ENCODE measurements at regions of chr14 and their contacts with region 1.

Region 1: DNA sequence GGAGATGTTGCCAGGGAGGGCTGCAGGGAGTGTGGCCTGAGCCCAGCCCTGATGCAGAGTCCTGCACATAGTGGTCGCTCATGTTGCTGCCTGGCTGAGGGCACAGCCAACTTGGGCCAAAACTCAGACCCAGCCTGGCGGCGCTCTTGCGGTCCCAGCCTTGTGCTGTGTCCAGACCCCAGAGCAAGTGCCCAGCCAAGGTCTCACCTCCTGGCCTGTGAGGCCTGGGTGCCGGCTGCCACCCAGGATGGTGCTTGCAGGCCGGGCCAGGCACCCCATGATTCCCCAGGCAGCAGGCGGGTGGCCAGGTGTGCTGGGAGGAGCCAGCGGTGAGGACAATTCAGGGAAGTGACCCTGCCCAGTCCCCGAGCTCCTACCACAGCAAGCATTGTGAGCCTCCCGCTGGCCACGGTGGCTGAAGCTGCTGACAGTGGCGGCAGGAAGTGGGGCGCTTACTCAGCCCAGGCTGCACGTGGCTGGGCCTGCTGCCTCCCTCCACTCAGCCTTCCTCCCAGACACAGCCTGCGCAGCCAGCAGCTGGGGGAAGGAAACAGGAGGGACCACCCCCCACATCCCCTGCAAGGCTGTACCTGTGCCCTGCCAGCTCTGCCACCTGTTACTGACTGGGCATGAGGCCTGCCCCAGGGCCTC is 17.7 kb upstream of the PGF start:
- DNase-seq: no peak
- H3K4me3 ChIP-seq: no peak overlapping the region
- H3K27ac ChIP-seq: no peak overlapping the region
- H3K4me1 ChIP-seq: peaks cover 5 to 14% (median 9%) of the 10 kb centered on the region in 4 experiments; a peak in 6 of 7 replicates
- H3K27me3 ChIP-seq: 0 out of 7 replicates have a peak, but pooled peaks cover 0 to 2% (median 0%) of the 10 kb centered on the region in 4 experiments
- CTCF ChIP-seq: no peak
- EP300 ChIP-seq: no peak
- POLR2A ChIP-seq: no peak
- RAD21 ChIP-seq: no peak

Region 2: DNA sequence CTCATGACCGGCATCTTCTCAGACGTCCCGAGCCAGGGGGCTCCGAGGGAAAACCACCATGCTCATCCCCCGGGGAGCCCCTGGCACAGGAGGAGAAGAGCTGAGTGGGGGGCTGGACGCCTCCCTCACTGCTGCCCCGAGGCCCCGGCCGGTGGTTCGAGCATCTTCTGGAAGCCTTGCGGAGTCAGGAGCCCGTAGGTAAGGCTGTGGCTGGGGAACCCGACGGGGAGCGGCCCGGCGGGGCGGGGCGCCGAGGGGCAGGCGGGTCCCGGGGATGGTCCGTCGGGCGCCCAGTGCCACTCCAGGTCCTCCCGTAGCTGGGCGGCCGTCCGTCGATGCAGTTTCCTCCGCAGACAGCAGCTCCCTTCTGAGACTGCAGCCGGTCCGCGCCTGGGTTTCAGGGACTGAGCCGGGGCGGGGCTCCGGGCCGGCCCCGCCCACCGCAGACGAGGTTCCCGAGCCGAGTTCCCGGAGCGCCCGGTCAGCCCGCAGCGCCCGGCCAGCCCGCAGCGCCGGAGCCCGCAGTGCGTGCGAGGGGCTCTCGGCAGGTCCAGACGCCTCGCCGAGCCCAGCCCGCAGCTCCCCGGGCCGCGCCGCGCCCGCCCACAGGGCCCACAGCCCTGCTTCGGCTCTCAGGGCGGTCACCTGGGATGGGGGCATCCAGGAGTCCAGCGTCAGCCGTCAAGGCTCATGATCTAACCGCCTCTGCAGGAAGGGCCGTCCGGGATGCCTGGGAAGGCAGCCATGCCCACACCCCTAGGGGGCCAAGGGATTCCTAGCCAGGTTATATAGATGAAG is 17.7 kb before region 1 on chr14 and contains the start of gene PGF:
- CTCF ChIA-PET with region 1: interaction called, 33 read pairs
- POLR2A ChIA-PET with region 1: interaction called, 17 read pairs
- DNase-seq: peak in 1 of 2 experiments; percentile 89
- H3K4me3 ChIP-seq: peak within 1 kb of the TSS; percentile 31 to 62 (median 56)
- H3K27ac ChIP-seq: no peak within 1 kb of the TSS
- H3K4me1 ChIP-seq: peaks cover 2 to 30% (median 15%) of the 10 kb centered on the region in 4 experiments
- H3K27me3 ChIP-seq: peaks cover 0 to 13% (median 12%) of the 10 kb centered on the region in 4 experiments; a peak in 5 of 7 replicates
- CTCF ChIP-seq: no peak
- EP300 ChIP-seq: no peak
- POLR2A ChIP-seq: peak in 1 of 2 experiments; percentile 62; a peak in 2 of 3 replicates
- RAD21 ChIP-seq: no peak
- total RNA-seq, gene PGF: 3.9 and 4.1 TPM in 2 replicates

Region 3: DNA sequence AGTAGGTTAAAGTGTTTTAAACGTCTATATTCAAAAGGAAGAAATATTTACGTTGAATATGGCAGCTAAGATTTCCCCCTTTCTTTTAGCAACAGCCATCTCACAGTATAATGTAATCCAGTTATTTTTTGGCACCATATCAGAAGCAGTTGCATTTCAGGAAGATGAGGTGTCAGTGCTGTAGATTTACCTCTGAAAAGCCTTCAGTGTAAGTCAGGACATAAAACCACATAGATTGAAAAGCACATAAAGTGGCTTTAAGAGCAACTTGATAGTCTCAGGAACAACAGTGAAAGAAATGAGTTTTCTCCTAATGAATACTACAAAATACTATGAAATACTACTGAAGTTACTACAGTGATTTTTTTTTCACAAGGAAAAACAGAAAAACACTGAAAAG is 71.2 kb after region 1 on chr14:
- CTCF ChIA-PET with region 1: no interaction called
- POLR2A ChIA-PET with region 1: no interaction called
- DNase-seq: no peak
- H3K4me3 ChIP-seq: no peak overlapping the region
- H3K27ac ChIP-seq: no peak overlapping the region
- H3K4me1 ChIP-seq: no peaks in the 10 kb centered on the region
- H3K27me3 ChIP-seq: no peaks in the 10 kb centered on the region
- CTCF ChIP-seq: no peak
- EP300 ChIP-seq: no peak
- POLR2A ChIP-seq: no peak
- RAD21 ChIP-seq: no peak

Region 4: GRCh38 chr14:75126679-75127473 is 153.7 kb after region 1 on chr14 and contains the start of gene NEK9:
- CTCF ChIA-PET with region 1: no interaction called
- POLR2A ChIA-PET with region 1: no interaction called
- DNase-seq: peak; percentile 56 to 88
- H3K4me3 ChIP-seq: peak within 1 kb of the TSS; percentile 75 to 89 (median 86)
- H3K27ac ChIP-seq: peak within 1 kb of the TSS; percentile 86
- H3K4me1 ChIP-seq: peaks cover 0 to 4% (median 1%) of the 10 kb centered on the region in 4 experiments; a peak in 5 of 7 replicates
- H3K27me3 ChIP-seq: no peaks in the 10 kb centered on the region
- CTCF ChIP-seq: 0 out of 4 replicates have a peak, but pooled peaks of 1 of the 3 experiments have one; percentile 3
- EP300 ChIP-seq: peak in 1 of 2 experiments; percentile 0; a peak in 1 of 3 replicates
- POLR2A ChIP-seq: peak; percentile 44 to 96
- RAD21 ChIP-seq: no peak
- total RNA-seq, gene NEK9: 39.5 and 43.6 TPM in 2 replicates

Region 5: DNA sequence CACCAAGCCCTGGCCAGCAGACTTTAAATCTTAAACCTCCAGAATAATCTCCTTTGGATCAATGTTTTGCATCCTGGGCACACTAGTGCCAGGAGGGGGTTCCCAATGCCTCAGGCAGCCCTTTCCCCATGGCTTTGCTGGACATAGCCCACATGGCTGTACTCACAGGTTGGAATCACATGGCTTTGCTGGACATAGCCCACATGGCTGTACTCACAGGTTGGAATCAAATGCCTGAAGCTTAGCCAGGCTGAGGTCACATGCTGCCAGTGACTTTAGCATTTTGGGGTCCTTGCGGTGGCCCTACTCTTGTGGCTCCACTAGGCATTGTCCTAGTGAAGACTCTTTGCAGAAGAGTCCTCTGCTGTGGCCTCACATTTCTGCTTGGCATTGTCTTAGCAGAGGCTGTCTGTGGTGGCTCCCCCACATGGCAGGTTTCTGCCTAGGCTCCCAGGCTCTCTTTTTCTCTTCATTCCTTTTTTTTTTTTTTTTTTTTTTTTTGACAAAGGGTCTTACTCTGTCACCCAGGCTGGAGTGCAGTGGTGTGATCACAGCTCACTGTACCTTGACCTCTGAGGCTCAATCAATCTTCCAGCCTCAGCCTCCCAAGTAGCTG is 618.3 kb after region 1 on chr14:
- CTCF ChIA-PET with region 1: no interaction called
- POLR2A ChIA-PET with region 1: no interaction called
- DNase-seq: no peak
- H3K4me3 ChIP-seq: no peak overlapping the region
- H3K27ac ChIP-seq: no peak overlapping the region
- H3K4me1 ChIP-seq: no peaks in the 10 kb centered on the region
- H3K27me3 ChIP-seq: no peaks in the 10 kb centered on the region
- CTCF ChIP-seq: peak; percentile 16 to 41 (median 36); a peak in 2 of 4 replicates
- EP300 ChIP-seq: no peak
- POLR2A ChIP-seq: no peak
- RAD21 ChIP-seq: peak in 1 of 2 experiments; percentile 18; a peak in 1 of 4 replicates